ENCODE measurements at regions of chr6 and their contacts with region 1.

Region 1: DNA sequence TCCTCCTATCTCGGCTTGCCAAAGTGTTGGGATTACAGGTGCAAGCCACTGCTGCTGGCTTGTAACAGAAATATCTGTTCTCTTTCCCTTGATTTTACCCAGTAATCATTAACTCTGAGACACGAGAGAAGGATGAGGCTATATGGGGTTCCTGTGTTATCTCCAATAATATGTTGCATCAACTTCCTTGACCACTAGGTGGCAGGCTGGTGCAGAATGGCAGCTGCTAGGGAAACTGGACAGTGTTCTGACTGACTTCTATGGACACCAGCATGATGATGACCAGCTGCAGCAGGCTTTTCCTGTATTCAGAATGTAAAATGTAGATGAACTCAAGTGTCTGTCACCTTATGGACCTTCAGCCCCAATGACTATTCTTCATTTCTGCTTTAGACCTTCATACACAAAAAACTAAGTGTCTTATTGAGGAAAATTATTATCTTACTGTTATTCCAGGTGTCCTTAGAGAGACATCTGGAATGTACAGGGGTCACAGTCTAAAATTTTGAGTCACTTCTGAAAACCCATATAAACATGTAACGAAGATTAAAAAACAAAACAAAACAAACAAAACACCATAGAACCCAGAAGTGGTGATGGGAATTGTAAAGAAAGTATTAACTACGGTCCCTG is 20.4 kb upstream of the CD109 start:
- DNase-seq: no peak
- ATAC-seq: peak; percentile 98
- H3K4me3 ChIP-seq: no peak overlapping the region
- H3K27ac ChIP-seq: no peak overlapping the region
- H3K4me1 ChIP-seq: no peaks in the 10 kb centered on the region
- H3K27me3 ChIP-seq: no peaks in the 10 kb centered on the region
- CTCF ChIP-seq: peak; percentile 89

Region 2: GRCh38 chr6:73732845-73733675 is 57.5 kb after region 1 on chr6:
- intact Hi-C with region 1: loop called (anchors 10 kb)
- DNase-seq: peak; percentile 67
- ATAC-seq: peak; percentile 97
- H3K4me3 ChIP-seq: no peak overlapping the region
- H3K27ac ChIP-seq: no peak overlapping the region
- H3K4me1 ChIP-seq: no peaks in the 10 kb centered on the region
- H3K27me3 ChIP-seq: no peaks in the 10 kb centered on the region
- CTCF ChIP-seq: peak; percentile 92

Region 3: GRCh38 chr6:75210885-75211739 is 1535.5 kb after region 1 on chr6:
- intact Hi-C with region 1: loop called (anchors 10 kb)
- DNase-seq: no peak
- ATAC-seq: peak; percentile 31
- H3K4me3 ChIP-seq: no peak overlapping the region
- H3K27ac ChIP-seq: no peak overlapping the region
- H3K4me1 ChIP-seq: peaks cover 19% of the 10 kb centered on the region
- H3K27me3 ChIP-seq: peaks cover 24% of the 10 kb centered on the region
- CTCF ChIP-seq: peak; percentile 88

Measured in upper lobe of right lung (tissue), 1 donor.